ENCODE measurements at regions of chr6 and their contacts with region 1.

Region 1: GRCh38 chr6:75266716-75267291 is 17.8 kb downstream of the TMEM30A start:
- DNase-seq: no peak
- ATAC-seq: peak; percentile 51
- H3K4me3 Mint-ChIP-seq: no peak overlapping the region
- H3K27ac Mint-ChIP-seq: no peak overlapping the region
- H3K4me1 Mint-ChIP-seq: peaks cover 35% of the 10 kb centered on the region
- H3K27me3 Mint-ChIP-seq: no peaks in the 10 kb centered on the region

Region 2: DNA sequence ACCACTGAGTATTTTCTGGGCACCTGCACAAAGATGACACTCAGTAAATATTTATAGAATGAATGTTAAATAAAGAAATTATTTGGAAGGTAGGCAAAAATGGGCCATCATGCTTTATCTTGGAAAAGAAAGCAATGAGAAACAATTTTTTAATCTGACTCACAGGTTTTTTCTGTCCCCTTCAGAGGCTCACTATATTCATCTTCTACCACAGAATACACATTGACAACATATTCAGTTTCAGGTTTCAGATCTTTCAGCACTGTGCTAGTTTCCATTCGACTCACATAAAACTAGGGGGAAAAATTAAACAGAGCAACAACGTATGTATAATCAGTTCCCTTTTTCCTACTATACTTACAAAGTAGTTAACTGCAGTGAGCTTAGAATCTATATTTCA is 119.3 kb before region 1 on chr6:
- CTCF ChIA-PET with region 1: no interaction called
- POLR2A ChIA-PET with region 1: no interaction called
- intact Hi-C with region 1: no loop called
- DNase-seq: no peak
- ATAC-seq: peak; percentile 84
- H3K4me3 Mint-ChIP-seq: no peak overlapping the region
- H3K27ac Mint-ChIP-seq: no peak overlapping the region
- H3K4me1 Mint-ChIP-seq: peaks cover 1% of the 10 kb centered on the region
- H3K27me3 Mint-ChIP-seq: peaks cover 25% of the 10 kb centered on the region

Region 3: GRCh38 chr6:75243333-75244062 is 23.3 kb before region 1 on chr6 and contains the start of gene COX7A2:
- CTCF ChIA-PET with region 1: interaction called, 13 read pairs
- POLR2A ChIA-PET with region 1: interaction called, 3 read pairs
- intact Hi-C with region 1: loop called in 1 of 2 experiments (anchors 1 kb)
- DNase-seq: peak; percentile 91
- ATAC-seq: peak; percentile 97
- H3K4me3 Mint-ChIP-seq: peak within 1 kb of the TSS; percentile 91
- H3K27ac Mint-ChIP-seq: peak within 1 kb of the TSS; percentile 95
- H3K4me1 Mint-ChIP-seq: peaks cover 35% of the 10 kb centered on the region
- H3K27me3 Mint-ChIP-seq: peaks cover 12% of the 10 kb centered on the region
- total RNA-seq, gene COX7A2: 468 to 520 TPM

Region 4: DNA sequence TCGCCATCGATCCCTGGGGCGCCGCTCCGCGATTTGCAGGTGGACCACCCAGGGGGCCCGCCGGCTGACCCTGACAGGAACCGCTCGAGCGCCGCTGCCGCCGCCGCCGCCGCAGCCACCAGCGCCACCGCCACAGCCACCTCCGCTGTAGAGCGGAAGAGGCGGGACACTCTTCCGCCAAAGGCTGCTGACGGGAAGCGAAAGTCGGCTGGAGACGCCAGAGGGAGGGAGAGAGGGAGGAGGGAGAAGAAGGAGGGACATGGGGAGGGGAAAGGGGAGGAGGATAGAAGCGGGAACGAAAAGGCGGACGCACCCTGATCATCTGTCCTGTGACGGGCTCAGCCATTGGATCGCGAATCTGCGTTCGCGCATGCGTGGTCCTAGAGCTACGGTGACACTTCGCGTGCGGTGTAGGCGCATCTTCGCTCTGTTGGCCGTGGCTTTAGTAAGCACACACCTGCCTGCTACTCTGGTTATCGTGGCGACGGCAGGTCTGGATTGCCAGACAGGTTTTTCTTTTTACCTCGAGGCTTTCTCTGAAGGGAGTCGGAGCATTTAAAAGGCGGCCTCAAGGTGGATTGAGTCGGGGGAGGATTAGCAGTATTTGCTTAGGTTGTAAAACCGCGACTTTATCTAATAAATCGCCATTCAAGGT is 18.0 kb after region 1 on chr6 and contains the start of gene TMEM30A:
- CTCF ChIA-PET with region 1: interaction called, 29 read pairs
- POLR2A ChIA-PET with region 1: interaction called, 3 read pairs
- intact Hi-C with region 1: loop called (anchors 1 to 2 kb)
- DNase-seq: peak; percentile 98
- ATAC-seq: peak; percentile 97
- H3K4me3 Mint-ChIP-seq: no peak within 1 kb of the TSS
- H3K27ac Mint-ChIP-seq: no peak within 1 kb of the TSS
- H3K4me1 Mint-ChIP-seq: peaks cover 48% of the 10 kb centered on the region
- H3K27me3 Mint-ChIP-seq: no peaks in the 10 kb centered on the region
- total RNA-seq, gene TMEM30A: 23.4 to 44.3 TPM

Region 5: DNA sequence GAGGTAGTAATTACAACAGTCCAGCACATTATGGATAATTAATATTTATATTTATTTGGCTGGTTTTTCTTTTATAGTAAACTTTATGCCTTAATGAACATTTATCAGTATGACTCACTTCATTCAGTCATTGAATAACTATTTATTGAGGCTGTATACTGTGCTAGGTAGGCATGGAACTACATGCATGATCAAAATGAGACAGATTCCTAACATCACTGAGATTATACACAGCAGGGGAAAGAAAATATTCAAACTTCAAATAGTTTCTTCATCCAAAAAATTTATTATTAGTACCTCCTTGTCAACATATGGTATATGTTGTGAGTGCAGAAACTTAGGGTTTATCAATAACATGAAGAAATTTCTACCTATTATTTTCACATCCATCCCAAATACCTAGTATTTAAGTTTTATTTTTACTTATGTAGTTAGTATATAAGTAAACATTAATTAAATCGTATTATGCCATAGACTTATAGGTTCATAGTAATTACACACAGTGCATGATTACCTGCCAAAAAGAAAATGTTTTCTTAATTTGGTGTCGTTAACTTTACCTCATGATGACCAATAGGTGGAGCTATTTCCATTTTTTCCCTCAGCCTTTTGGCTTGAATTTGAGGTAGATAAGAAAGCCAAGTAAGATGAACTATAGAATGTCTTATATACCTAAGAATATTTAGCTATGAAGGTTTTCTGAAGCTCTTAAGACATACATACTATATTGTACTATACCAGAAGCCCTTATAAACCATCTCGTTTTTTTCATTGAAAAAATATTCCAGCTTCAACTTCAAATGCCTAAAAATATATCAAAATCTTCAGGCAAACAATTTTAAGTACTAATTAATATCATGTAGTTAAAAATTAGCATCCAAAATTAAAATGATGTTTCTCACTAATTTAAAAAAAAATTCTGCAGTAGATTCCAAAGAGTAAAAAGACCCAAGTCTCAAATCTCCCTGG is 30.3 kb after region 1 on chr6:
- CTCF ChIA-PET with region 1: interaction called, 6 read pairs
- POLR2A ChIA-PET with region 1: interaction called, 3 read pairs
- intact Hi-C with region 1: loop called in 1 of 2 experiments (anchors 1 kb)
- DNase-seq: no peak
- ATAC-seq: peak; percentile 42
- H3K4me3 Mint-ChIP-seq: no peak overlapping the region
- H3K27ac Mint-ChIP-seq: no peak overlapping the region
- H3K4me1 Mint-ChIP-seq: no peaks in the 10 kb centered on the region
- H3K27me3 Mint-ChIP-seq: no peaks in the 10 kb centered on the region

Region 6: GRCh38 chr6:75305573-75305972 is 38.8 kb after region 1 on chr6:
- CTCF ChIA-PET with region 1: interaction called, 11 read pairs
- POLR2A ChIA-PET with region 1: no interaction called
- intact Hi-C with region 1: no loop called
- DNase-seq: no peak
- ATAC-seq: no peak
- H3K4me3 Mint-ChIP-seq: no peak overlapping the region
- H3K27ac Mint-ChIP-seq: no peak overlapping the region
- H3K4me1 Mint-ChIP-seq: peaks cover 5% of the 10 kb centered on the region
- H3K27me3 Mint-ChIP-seq: peaks cover 2% of the 10 kb centered on the region

Region 7: DNA sequence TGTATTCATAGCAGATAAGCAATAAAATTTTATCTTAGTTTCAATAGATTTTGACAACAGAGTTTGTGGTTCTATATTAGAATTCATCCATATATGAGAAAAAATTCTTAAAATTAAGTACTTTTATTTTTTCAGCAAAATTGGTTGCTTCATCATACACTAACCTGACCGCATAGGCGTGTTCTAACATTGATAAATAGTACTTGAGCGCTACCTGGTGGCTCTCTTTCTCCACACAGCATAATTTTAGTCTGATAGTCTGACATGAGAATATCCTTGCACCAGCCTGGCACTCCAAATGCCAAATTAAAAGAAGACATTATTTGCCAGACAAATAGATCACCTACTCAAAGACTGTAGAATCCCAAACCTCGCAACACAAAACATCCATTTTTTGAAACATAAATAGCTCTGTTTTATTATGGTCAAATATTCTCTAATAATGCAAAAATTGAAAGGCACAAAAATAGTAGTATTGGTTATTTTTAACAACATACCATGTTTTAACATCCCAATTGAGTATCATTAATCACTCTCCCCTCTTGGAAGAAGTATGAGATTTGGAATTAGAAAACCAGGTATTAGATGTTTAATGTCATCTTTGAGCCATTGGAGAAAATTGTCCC is 259.8 kb after region 1 on chr6:
- CTCF ChIA-PET with region 1: interaction called, 14 read pairs
- POLR2A ChIA-PET with region 1: no interaction called
- intact Hi-C with region 1: loop called (anchors 1 kb)
- DNase-seq: peak; percentile 68
- ATAC-seq: peak; percentile 76
- H3K4me3 Mint-ChIP-seq: no peak overlapping the region
- H3K27ac Mint-ChIP-seq: no peak overlapping the region
- H3K4me1 Mint-ChIP-seq: no peaks in the 10 kb centered on the region
- H3K27me3 Mint-ChIP-seq: peaks cover 16% of the 10 kb centered on the region

Region 8: GRCh38 chr6:75546381-75546780 is 279.6 kb after region 1 on chr6:
- CTCF ChIA-PET with region 1: interaction called, 12 read pairs
- POLR2A ChIA-PET with region 1: no interaction called
- intact Hi-C with region 1: no loop called
- DNase-seq: no peak
- ATAC-seq: no peak
- H3K4me3 Mint-ChIP-seq: no peak overlapping the region
- H3K27ac Mint-ChIP-seq: no peak overlapping the region
- H3K4me1 Mint-ChIP-seq: peaks cover 4% of the 10 kb centered on the region
- H3K27me3 Mint-ChIP-seq: peaks cover 4% of the 10 kb centered on the region